ENCODE measurements at regions of chr10 and their contacts with region 1.

Region 1: DNA sequence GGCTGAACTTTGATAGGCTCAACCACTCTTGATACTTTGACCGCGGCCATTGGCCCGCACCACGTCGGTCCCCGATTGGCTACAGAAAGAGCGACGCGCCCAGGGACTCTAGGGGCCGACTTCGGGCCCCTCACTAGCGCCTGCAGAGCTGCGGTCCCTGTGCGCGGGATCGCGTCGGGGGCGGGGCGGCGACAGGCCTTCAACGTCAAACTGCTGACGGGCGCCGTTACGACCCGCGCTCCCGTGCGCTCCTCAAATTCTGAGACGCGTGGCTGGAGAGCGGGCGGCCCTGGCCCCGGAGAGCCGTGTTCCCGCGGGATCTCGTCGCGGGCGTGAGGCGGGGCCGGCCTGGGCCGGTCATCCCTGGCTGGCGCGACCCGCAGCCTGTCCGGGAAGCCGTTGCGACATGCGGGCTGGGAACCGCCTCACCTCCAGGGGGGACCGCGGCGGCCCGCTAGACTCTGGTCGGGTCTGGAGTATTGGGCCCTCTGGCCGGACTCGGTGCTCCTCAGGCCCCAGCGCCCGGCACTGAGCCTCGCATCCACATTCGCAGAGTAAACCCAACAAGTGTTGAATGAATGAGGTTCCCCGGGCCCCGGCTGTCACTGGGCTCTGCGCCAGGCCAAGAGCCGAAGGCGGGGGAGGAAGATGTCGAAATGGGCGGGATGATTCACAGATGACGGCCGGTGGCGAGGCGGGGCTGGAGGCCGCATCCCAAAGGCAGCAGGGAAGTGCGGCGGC is 644 bp upstream of the SLC25A28 start:
- DNase-seq: peak; percentile 95
- H3K4me3 Mint-ChIP-seq: peak overlapping the region; percentile 78
- H3K27ac Mint-ChIP-seq: peak overlapping the region; percentile 98
- H3K4me1 Mint-ChIP-seq: peaks cover 32% of the 10 kb centered on the region
- H3K27me3 Mint-ChIP-seq: no peaks in the 10 kb centered on the region
- CTCF ChIP-seq: no peak

Region 2: GRCh38 chr10:99667108-99667751 is 46.3 kb after region 1 on chr10:
- CTCF ChIA-PET with region 1: no interaction called
- POLR2A ChIA-PET with region 1: interaction called, 335 read pairs
- intact Hi-C with region 1: no loop called
- DNase-seq: peak; percentile 38
- H3K4me3 Mint-ChIP-seq: no peak overlapping the region
- H3K27ac Mint-ChIP-seq: peak overlapping the region; percentile 69
- H3K4me1 Mint-ChIP-seq: peaks cover 22% of the 10 kb centered on the region
- H3K27me3 Mint-ChIP-seq: no peaks in the 10 kb centered on the region
- CTCF ChIP-seq: no peak

Region 3: GRCh38 chr10:99685597-99685967 is 64.7 kb after region 1 on chr10:
- CTCF ChIA-PET with region 1: interaction called, 4 read pairs
- POLR2A ChIA-PET with region 1: interaction called, 62 read pairs
- intact Hi-C with region 1: loop called (anchors 2 kb)
- DNase-seq: peak; percentile 11
- H3K4me3 Mint-ChIP-seq: no peak overlapping the region
- H3K27ac Mint-ChIP-seq: peak overlapping the region; percentile 88
- H3K4me1 Mint-ChIP-seq: peaks cover 27% of the 10 kb centered on the region
- H3K27me3 Mint-ChIP-seq: no peaks in the 10 kb centered on the region
- CTCF ChIP-seq: no peak

Measured in MCF 10A (cell line).